ENCODE measurements at regions of chr1 and their contacts with region 1.

Region 1: DNA sequence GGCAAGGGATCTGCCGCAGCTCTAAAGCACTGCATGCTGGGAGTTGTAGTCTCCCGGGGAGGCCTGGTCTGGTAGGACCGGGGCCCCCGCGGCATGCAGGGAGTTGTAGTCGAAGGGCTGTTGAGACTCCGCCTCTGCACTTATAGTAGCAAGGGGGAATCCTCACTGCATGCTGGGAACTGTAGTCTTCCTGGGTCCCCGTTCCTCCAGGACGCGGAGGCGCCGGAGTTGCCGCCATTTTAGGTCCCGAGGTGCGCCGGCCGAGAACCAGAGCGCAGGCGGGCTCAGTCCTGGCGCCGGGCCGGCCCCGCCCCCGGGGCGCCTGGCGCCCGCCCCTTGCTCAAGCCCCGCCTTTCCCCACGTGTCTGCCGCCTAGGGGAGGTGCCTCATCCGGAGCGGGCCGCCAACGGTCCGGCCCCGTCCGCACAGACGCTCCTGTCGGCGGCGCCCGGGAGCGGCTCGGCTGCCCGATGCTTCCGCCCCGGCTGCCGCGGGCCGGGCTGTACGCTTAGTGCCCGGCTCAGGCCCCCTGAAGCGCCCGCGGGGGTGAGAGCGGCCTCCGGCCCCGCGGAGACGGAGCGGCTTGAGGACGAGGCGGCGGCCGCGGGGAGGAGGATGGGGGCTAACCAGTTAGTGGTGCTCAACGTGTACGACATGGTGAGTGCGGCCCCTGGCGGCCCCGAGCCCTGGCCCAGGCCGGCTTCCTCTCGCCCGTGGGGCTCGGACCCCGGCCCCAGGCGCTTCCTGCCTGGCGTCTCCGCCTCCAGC is at the start of gene DESI2:
- DNase-seq: peak; percentile 99
- ATAC-seq: peak; percentile 93
- H3K4me3 Mint-ChIP-seq: peak within 1 kb of the TSS; percentile 80
- H3K27ac Mint-ChIP-seq: peak within 1 kb of the TSS; percentile 84
- H3K4me1 Mint-ChIP-seq: peaks cover 17% of the 10 kb centered on the region
- H3K27me3 Mint-ChIP-seq: no peaks in the 10 kb centered on the region
- total RNA-seq, gene DESI2: 29.1 to 34.3 TPM

Region 2: GRCh38 chr1:244515680-244516079 is 137.2 kb before region 1 on chr1:
- CTCF ChIA-PET with region 1: no interaction called
- POLR2A ChIA-PET with region 1: no interaction called
- DNase-seq: no peak
- ATAC-seq: no peak
- H3K4me3 Mint-ChIP-seq: no peak overlapping the region
- H3K27ac Mint-ChIP-seq: no peak overlapping the region
- H3K4me1 Mint-ChIP-seq: no peaks in the 10 kb centered on the region
- H3K27me3 Mint-ChIP-seq: no peaks in the 10 kb centered on the region

Region 3: DNA sequence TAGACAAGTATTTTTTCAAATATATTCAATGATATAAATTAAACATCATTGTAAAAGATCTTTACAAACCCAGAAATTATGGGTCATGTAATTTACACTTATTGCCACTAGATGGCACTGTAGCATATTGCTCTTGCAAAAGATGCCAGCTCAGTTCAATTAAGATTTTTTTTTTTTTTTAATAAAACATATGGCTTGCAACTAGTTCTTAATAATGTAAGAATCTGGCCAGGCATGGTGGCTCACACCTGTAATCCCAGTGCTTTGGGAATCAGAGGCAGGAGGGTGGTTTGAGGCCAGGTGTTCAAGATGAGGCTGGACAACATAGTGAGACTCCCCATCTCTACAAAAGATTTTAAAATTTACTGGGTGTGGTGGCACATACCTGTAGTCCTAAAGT is 49.4 kb before region 1 on chr1:
- CTCF ChIA-PET with region 1: interaction called, 14 read pairs
- POLR2A ChIA-PET with region 1: interaction called, 4 read pairs
- DNase-seq: no peak
- ATAC-seq: no peak
- H3K4me3 Mint-ChIP-seq: no peak overlapping the region
- H3K27ac Mint-ChIP-seq: no peak overlapping the region
- H3K4me1 Mint-ChIP-seq: no peaks in the 10 kb centered on the region
- H3K27me3 Mint-ChIP-seq: no peaks in the 10 kb centered on the region

Region 4: DNA sequence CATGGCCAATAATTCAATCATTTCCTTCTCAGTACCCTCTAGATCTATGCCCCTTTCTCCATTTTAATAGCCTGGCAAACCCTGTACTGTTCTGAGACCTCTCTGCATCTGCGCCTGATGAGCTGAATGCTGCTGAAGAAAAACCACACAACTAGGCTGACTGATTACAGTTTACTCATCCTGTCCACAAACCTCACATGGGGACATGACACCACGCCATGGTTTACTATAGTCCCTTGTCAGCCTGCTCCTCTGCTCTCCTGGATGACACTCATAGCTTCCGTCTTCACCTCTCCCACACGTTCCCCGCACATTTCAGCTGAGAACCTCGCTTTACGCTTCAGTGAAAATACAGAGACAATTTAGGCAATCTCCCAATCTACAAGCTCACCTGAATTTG is 59.8 kb after region 1 on chr1:
- CTCF ChIA-PET with region 1: no interaction called
- POLR2A ChIA-PET with region 1: no interaction called
- DNase-seq: peak; percentile 27
- ATAC-seq: peak; percentile 47
- H3K4me3 Mint-ChIP-seq: no peak overlapping the region
- H3K27ac Mint-ChIP-seq: no peak overlapping the region
- H3K4me1 Mint-ChIP-seq: peaks cover 8% of the 10 kb centered on the region
- H3K27me3 Mint-ChIP-seq: no peaks in the 10 kb centered on the region